Body of pancreas (tissue), 4 donors: ENCODE measurements at regions of chr11 and their contacts with region 1.

Region 1: GRCh38 chr11:65779851-65780577 is 762 bp downstream of the AP5B1 start:
- DNase-seq: peak; percentile 84 to 88 (median 86)
- ATAC-seq: peak; percentile 82
- H3K4me3 ChIP-seq: peak overlapping the region; percentile 82 to 87
- H3K27ac ChIP-seq: peak overlapping the region; percentile 85 to 94 (median 89)
- H3K4me1 ChIP-seq: peaks cover 53% of the 10 kb centered on the region
- H3K27me3 ChIP-seq: no peaks in the 10 kb centered on the region
- CTCF ChIP-seq: peak; percentile 95 to 99 (median 98)
- POLR2A ChIP-seq: peak; percentile 54 to 80 (median 73)

Region 2: DNA sequence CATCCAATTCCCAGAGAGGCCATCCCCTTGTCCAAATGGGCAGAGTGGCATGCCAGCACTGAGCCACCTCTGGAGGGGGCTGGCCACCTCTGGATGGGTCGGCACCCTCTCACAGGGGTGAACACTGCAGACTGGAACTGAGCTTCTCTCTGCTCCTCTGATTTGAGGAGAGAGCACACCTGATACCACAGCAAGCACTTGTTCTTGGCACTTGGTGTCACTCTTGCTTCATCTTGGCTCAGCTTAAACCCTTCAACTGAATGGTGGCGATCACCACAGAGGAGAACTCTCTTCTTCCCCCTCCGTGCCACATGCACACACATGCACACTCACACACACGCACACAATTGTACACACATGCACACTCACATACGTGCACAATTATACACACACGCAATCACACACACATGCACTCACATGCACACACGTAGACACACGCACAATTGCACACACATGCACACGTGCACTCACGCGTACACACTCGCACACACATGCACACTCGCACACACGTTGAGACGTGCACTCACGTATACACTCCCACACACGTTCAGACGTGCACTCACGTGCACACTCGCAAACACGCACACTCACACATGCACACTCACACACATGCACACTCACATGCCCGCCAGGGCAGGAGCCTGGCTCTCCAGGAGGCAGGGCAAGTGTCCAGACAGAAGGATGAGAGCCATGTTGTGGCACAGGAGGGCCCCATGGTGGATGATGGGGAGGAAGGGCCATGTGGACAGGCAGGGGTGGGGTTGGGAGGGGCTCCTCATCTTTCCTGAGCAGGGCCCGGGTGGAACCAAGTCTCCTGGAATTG is 30.2 kb after region 1 on chr11:
- intact Hi-C with region 1: loop called (anchors 5 kb)
- DNase-seq: no peak
- ATAC-seq: no peak
- H3K4me3 ChIP-seq: no peak overlapping the region
- H3K27ac ChIP-seq: no peak overlapping the region
- H3K4me1 ChIP-seq: no peaks in the 10 kb centered on the region
- H3K27me3 ChIP-seq: peaks cover 0 to 6% of the 10 kb centered on the region in 2 donors
- CTCF ChIP-seq: no peak
- POLR2A ChIP-seq: no peak

Region 3: DNA sequence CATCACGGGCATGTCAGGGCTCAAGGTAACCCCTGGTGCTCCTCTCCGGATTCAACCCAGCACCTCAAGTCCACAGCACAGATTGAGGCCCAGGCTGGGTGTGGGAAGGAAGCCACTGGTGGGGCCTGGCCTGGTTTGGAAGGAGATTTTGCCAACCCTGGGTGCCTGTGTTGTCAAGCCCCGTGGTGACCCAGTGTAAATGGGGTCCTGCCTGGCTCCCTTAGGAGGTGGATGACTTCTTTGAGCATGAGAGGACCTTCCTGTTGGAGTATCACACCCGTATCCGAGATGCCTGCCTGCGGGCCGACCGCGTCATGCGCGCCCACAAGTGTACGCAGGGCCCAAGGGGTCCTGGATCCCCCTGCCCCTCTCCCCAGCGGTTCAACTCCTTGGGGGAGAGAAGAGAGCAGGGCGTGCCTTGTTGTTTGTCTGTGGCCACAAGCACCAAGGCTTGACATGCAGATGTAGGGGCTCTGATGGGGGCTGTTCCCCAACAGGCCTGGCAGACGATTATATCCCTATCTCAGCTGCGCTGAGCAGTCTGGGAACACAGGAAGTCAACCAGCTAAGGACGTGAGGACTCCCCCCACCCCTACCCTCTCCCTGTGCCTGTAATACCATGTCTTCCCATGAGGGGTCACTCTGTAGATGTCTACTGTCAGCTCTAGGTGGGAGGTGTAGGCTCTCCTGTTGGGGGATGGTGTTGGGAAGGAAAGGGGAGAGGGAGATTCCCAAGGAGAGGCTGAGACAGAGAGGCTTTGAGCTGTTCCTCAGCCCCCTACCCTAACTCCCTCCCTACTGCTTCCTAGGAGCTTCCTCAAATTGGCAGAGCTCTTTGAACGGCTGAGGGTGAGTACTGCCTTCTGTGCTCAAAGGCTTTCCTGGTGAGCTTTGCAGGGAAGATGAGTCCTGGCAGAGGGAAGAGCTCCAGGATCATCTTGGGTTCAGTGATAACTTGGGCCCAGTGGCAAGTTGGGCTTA is 71.1 kb after region 1 on chr11:
- intact Hi-C with region 1: no loop called
- DNase-seq: no peak
- ATAC-seq: no peak
- H3K4me3 ChIP-seq: no peak overlapping the region
- H3K27ac ChIP-seq: no peak overlapping the region
- H3K4me1 ChIP-seq: peaks cover 10% of the 10 kb centered on the region
- H3K27me3 ChIP-seq: no peaks in the 10 kb centered on the region
- CTCF ChIP-seq: peak in 4 of 7 experiments; percentile 17 to 38 (median 26)
- POLR2A ChIP-seq: no peak

Region 4: GRCh38 chr11:66172143-66172542 is 392.1 kb after region 1 on chr11:
- intact Hi-C with region 1: no loop called
- DNase-seq: no peak
- ATAC-seq: no peak
- H3K4me3 ChIP-seq: no peak overlapping the region
- H3K27ac ChIP-seq: no peak overlapping the region
- H3K4me1 ChIP-seq: no peaks in the 10 kb centered on the region
- H3K27me3 ChIP-seq: no peaks in the 10 kb centered on the region
- CTCF ChIP-seq: no peak
- POLR2A ChIP-seq: no peak